ENCODE measurements at regions of chr1 and their contacts with region 1.

Region 1: GRCh38 chr1:95233737-95234500 is at the start of gene RWDD3:
- DNase-seq: peak; percentile 98
- ATAC-seq: peak; percentile 95
- total RNA-seq, gene RWDD3: 15.9 TPM

Region 2: GRCh38 chr1:95072532-95073419 is 161.1 kb before region 1 on chr1 and contains the start of gene ALG14:
- intact Hi-C with region 1: loop called (anchors 5 kb)
- DNase-seq: peak; percentile 96
- ATAC-seq: peak; percentile 98
- total RNA-seq, gene ALG14: 2.9 TPM

Region 3: DNA sequence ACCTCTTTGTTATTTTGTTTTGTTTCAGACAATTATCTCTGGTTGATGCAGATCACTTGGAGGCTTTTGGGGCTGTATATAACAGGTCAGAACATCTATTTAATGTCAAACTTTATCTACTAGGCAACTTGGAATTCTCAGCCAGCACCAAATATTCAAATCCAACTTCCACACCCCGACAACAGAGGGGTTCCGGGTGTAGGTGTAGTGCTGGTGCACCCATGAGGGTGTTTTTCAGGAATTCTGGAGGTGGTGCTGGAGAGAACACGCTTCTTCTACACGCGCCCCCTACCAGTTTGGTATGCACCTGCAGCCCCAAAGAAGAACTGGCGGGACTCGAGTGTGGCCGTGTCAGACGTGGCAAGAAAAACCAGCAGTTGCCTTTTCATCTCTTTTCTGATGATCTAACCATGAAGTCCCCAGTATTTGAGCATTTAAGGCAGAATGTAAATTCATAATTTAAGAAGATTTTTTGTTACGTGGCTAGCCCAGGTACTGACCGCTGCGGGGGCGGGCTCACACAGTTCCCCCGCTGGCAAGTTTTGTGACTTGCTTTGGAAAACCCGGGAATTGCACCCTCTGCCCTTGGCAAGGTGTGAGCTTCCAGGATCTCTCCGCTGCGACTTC is 117.2 kb before region 1 on chr1:
- intact Hi-C with region 1: loop called (anchors 10 kb)
- DNase-seq: peak; percentile 70
- ATAC-seq: peak; percentile 83

Measured in Right ventricle myocardium superior (tissue), 1 donor.